K562 (cell line): ENCODE measurements at regions of chr12 and their contacts with region 1.

Region 1: DNA sequence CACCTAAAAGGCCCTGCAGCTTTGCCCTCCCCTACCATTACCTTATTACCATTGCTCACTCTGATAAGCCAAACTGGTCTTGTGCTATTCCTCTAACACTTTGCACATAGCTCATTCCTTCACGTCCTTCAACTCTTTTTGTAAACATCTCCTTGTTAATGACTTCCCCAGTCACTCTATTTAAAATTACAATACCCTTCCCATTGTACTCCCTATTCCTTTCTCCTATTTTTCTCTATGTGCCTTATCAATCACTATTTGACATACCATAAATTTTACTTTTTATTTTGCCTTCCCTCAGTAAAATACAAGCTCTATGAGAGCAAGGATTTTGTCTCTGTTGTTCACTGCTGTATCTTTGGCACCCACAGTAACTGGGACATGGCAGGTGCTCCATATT is 5.4 kb downstream of the SARNP start:
- DNase-seq: no peak
- ATAC-seq: peak; percentile 14; the same call in 1 of the 3 replicates
- H3K4me3 ChIP-seq: no peak overlapping the region
- H3K27ac ChIP-seq: no peak overlapping the region
- H3K4me1 ChIP-seq: peaks cover 3 to 10% of the 10 kb centered on the region in 2 experiments; a peak in 4 of 5 replicates
- H3K27me3 ChIP-seq: no peaks in the 10 kb centered on the region
- CTCF ChIP-seq: no peak
- EP300 ChIP-seq: no peak
- POLR2A ChIP-seq: no peak
- RAD21 ChIP-seq: no peak

Region 2: DNA sequence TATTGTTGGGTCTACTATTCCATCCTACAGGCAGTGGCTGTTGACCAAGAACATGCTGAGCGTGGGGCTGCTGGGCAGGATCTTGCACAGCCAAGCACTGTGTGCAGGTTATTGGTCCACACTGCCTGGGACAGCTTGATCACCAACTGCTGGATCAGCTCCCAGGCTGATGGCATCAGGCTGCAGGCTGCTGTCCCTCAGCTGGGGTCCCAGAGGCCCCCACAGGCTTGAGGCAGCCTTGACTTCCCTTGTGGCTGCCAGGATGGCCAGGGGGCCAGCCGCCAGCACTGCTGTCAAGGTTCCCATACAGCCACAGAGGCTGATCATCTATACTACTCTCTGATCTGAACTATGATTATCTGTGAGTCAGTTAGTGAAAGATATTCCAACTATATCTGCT is 230.0 kb before region 1 on chr12:
- CTCF ChIA-PET with region 1: no interaction called
- POLR2A ChIA-PET with region 1: no interaction called
- in situ Hi-C with region 1: no loop called
- intact Hi-C with region 1: no loop called
- DNase-seq: no peak
- ATAC-seq: no peak
- H3K4me3 ChIP-seq: no peak overlapping the region
- H3K27ac ChIP-seq: no peak overlapping the region
- H3K4me1 ChIP-seq: no peaks in the 10 kb centered on the region
- H3K27me3 ChIP-seq: no peaks in the 10 kb centered on the region
- CTCF ChIP-seq: no peak
- EP300 ChIP-seq: no peak
- POLR2A ChIP-seq: no peak
- RAD21 ChIP-seq: no peak

Region 3: GRCh38 chr12:55797068-55797467 is 15.0 kb before region 1 on chr12:
- CTCF ChIA-PET with region 1: no interaction called
- POLR2A ChIA-PET with region 1: interaction called, 26 read pairs
- in situ Hi-C with region 1: no loop called
- intact Hi-C with region 1: no loop called
- DNase-seq: peak; percentile 31 to 61 (median 48)
- ATAC-seq: peak; percentile 90
- H3K4me3 ChIP-seq: no peak overlapping the region
- H3K27ac ChIP-seq: no peak overlapping the region
- H3K4me1 ChIP-seq: no peaks in the 10 kb centered on the region
- H3K27me3 ChIP-seq: no peaks in the 10 kb centered on the region
- CTCF ChIP-seq: peak; percentile 48 to 71 (median 54)
- EP300 ChIP-seq: no peak
- POLR2A ChIP-seq: no peak
- RAD21 ChIP-seq: peak; percentile 59 to 66

Region 4: GRCh38 chr12:55829967-55830600 is 18.0 kb after region 1 on chr12:
- CTCF ChIA-PET with region 1: no interaction called
- POLR2A ChIA-PET with region 1: interaction called, 64 read pairs
- in situ Hi-C with region 1: no loop called
- intact Hi-C with region 1: no loop called
- DNase-seq: peak; percentile 53 to 82 (median 70)
- ATAC-seq: peak; percentile 52
- H3K4me3 ChIP-seq: peak overlapping the region; percentile 78
- H3K27ac ChIP-seq: peak overlapping the region; percentile 83
- H3K4me1 ChIP-seq: peaks cover 28 to 42% of the 10 kb centered on the region in 2 experiments; a peak in 4 of 5 replicates
- H3K27me3 ChIP-seq: no peaks in the 10 kb centered on the region
- CTCF ChIP-seq: peak in 1 of 3 experiments; percentile 29; a peak in 2 of 6 replicates
- EP300 ChIP-seq: no peak
- POLR2A ChIP-seq: no peak
- RAD21 ChIP-seq: no peak; a peak in 1 of 4 replicates

Region 5: GRCh38 chr12:55899082-55899481 is 87.0 kb after region 1 on chr12:
- CTCF ChIA-PET with region 1: no interaction called
- POLR2A ChIA-PET with region 1: no interaction called
- in situ Hi-C with region 1: no loop called
- intact Hi-C with region 1: no loop called
- DNase-seq: peak in 3 of 4 experiments; percentile 25 to 73 (median 60)
- ATAC-seq: peak; percentile 87
- H3K4me3 ChIP-seq: no peak overlapping the region
- H3K27ac ChIP-seq: no peak overlapping the region
- H3K4me1 ChIP-seq: peaks cover 2 to 5% of the 10 kb centered on the region in 2 experiments; a peak in 3 of 5 replicates
- H3K27me3 ChIP-seq: no peaks in the 10 kb centered on the region
- CTCF ChIP-seq: no peak
- EP300 ChIP-seq: no peak
- POLR2A ChIP-seq: no peak
- RAD21 ChIP-seq: no peak

Region 6: DNA sequence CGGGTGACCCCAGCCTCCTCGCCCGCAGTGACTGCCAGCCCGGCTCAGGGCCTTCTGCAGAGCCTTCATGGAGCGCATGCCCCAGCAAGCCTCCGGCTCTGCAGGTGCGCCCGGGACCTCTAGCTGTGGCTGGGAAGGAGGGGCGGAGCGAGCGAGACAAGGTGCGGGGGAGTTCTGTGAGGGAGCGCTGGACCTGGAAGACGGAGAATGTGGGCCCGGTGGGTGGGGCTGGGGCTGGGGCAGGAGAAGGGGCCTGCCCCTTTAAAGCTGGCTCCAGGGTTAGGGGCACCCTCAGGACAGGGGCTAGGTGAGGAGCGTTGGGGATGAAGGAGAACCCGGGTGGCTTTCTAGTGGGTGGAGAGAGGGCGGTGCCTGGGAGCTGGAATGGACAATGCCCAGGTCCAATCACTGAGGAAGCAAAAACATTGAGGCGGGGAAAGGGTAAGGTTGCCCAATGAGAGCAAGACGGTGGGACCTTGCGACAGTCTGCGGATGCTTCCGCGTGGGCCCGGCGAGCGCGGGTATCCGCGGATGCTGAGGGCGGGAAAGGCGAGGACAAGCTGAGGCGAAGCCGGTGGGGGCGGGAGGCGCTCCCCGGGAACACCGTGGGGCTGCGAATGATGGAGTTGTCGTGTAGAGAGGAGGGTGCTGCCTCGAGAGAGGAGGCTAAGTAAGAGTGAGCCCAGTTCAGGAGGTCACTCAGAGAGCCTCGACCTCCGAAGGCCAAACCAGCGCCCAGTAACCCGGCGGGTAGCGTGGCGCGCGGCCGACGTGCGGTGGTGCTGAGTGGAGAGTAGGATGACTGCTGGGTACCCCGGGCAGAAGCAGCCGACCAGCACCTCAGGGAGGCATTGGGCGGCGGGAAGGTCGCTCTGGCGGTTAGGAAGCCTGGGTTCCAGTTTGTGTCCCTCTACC is 676.2 kb after region 1 on chr12 and contains the start of gene GLS2:
- CTCF ChIA-PET with region 1: no interaction called
- POLR2A ChIA-PET with region 1: no interaction called
- in situ Hi-C with region 1: no loop called
- intact Hi-C with region 1: no loop called
- DNase-seq: peak; percentile 28 to 67 (median 54)
- ATAC-seq: peak; percentile 84
- H3K4me3 ChIP-seq: no peak within 1 kb of the TSS
- H3K27ac ChIP-seq: no peak within 1 kb of the TSS
- H3K4me1 ChIP-seq: peaks cover 7 to 17% of the 10 kb centered on the region in 2 experiments; a peak in 3 of 5 replicates
- H3K27me3 ChIP-seq: peaks cover 27 to 51% of the 10 kb centered on the region in 2 experiments
- CTCF ChIP-seq: no peak
- EP300 ChIP-seq: no peak
- POLR2A ChIP-seq: no peak
- RAD21 ChIP-seq: no peak
- polyA plus RNA-seq, gene GLS2: not detected